Naive thymus-derived CD4-positive, alpha-beta T cell (primary cell): ENCODE measurements at regions of chr4 and their contacts with region 1.

Region 1: GRCh38 chr4:67087897-67088296 is 457.4 kb downstream of the CENPC start:
- DNase-seq: peak in 6 of 9 donors; percentile 2 to 24 (median 12)
- ATAC-seq: no peak
- H3K4me3 ChIP-seq: no peak overlapping the region
- H3K4me3 Mint-ChIP-seq: no peak overlapping the region
- H3K27ac ChIP-seq: no peak overlapping the region
- H3K27ac Mint-ChIP-seq: no peak overlapping the region
- H3K4me1 ChIP-seq: no peaks in the 10 kb centered on the region
- H3K4me1 Mint-ChIP-seq: no peaks in the 10 kb centered on the region
- H3K27me3 ChIP-seq: no peaks in the 10 kb centered on the region
- H3K27me3 Mint-ChIP-seq: no peaks in the 10 kb centered on the region

Region 2: GRCh38 chr4:66034671-66035070 is 1053.2 kb before region 1 on chr4:
- CTCF ChIA-PET with region 1: no interaction called
- POLR2A ChIA-PET with region 1: no interaction called
- intact Hi-C with region 1: no loop called
- DNase-seq: no peak
- ATAC-seq: no peak
- H3K4me3 ChIP-seq: no peak overlapping the region
- H3K4me3 Mint-ChIP-seq: no peak overlapping the region
- H3K27ac ChIP-seq: no peak overlapping the region
- H3K27ac Mint-ChIP-seq: no peak overlapping the region
- H3K4me1 ChIP-seq: no peaks in the 10 kb centered on the region
- H3K4me1 Mint-ChIP-seq: no peaks in the 10 kb centered on the region
- H3K27me3 ChIP-seq: no peaks in the 10 kb centered on the region
- H3K27me3 Mint-ChIP-seq: no peaks in the 10 kb centered on the region

Region 3: DNA sequence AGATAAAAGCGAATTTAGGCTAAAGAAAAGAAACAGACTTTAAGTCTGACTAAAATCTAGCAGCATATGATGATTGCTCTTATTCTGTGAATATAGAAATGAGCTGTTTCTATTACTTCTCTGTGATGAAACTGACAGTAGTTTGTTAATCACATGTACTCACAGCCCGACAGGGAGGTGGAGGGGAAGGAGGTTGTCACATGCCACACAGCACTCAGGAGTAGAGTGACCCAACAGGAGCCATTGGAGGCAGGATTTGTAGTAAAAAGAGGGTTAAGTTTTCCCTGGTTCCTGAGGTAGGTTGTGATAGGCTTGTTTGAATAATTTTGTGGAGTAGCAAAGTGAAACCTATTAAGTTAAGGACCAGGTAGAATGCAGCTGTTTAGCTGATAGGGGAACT is 38.5 kb before region 1 on chr4:
- CTCF ChIA-PET with region 1: no interaction called
- POLR2A ChIA-PET with region 1: no interaction called
- intact Hi-C with region 1: no loop called
- DNase-seq: no peak
- ATAC-seq: no peak
- H3K4me3 ChIP-seq: no peak overlapping the region
- H3K4me3 Mint-ChIP-seq: no peak overlapping the region
- H3K27ac ChIP-seq: no peak overlapping the region
- H3K27ac Mint-ChIP-seq: no peak overlapping the region
- H3K4me1 ChIP-seq: no peaks in the 10 kb centered on the region
- H3K4me1 Mint-ChIP-seq: no peaks in the 10 kb centered on the region
- H3K27me3 ChIP-seq: no peaks in the 10 kb centered on the region
- H3K27me3 Mint-ChIP-seq: peaks cover 0 to 4% (median 0%) of the 10 kb centered on the region in 5 donors

Region 4: DNA sequence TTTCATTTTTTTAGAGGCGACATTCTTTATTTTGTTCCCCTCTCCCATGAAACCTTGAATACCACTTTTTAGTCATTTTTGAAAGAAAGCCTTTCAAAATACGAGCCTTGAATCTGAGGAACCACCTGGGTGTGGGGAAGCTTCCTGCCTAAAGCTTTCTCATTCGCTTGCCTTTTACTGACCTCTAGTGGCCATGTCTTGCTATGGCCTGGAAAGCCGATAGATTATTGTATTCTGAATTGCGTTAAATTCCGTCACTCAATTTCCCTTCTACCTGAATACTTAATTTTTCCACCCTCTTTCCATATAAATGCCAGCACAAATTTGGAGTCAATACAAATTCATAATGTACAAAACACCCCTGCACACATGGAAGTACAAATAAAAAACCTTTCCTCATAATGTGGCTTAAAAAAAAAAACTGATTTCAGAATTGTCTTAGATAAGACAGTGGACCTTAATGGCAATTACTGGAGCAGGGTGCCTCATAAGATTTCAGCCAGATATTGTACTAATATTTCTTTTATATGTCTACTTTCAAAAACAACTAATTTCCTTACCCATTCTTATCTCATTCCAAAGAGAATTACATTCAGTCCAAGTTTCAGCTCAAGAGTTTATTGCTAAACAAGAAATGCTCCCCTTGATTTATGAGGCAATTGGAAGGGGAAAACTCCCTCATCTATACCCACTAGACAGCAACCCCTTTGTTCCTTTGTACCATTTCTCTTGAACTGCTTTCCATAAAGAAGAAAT is 239.5 kb after region 1 on chr4:
- CTCF ChIA-PET with region 1: interaction called, 5 read pairs
- POLR2A ChIA-PET with region 1: no interaction called
- intact Hi-C with region 1: loop called in 1 of 2 experiments (anchors 1 kb)
- DNase-seq: peak; percentile 5 to 60 (median 40)
- ATAC-seq: peak; percentile 81
- H3K4me3 ChIP-seq: no peak overlapping the region
- H3K4me3 Mint-ChIP-seq: no peak overlapping the region
- H3K27ac ChIP-seq: no peak overlapping the region
- H3K27ac Mint-ChIP-seq: no peak overlapping the region
- H3K4me1 ChIP-seq: no peaks in the 10 kb centered on the region
- H3K4me1 Mint-ChIP-seq: peaks cover 0 to 9% (median 2%) of the 10 kb centered on the region in 7 donors
- H3K27me3 ChIP-seq: no peaks in the 10 kb centered on the region
- H3K27me3 Mint-ChIP-seq: peaks cover 11 to 37% (median 29%) of the 10 kb centered on the region in 5 donors